ENCODE measurements at regions of chr1 and their contacts with region 1.

Region 1: GRCh38 chr1:25338188-25338981 is at the start of gene TMEM50A:
- DNase-seq: peak; percentile 70 to 94
- H3K4me3 ChIP-seq: peak within 1 kb of the TSS; percentile 85 to 98
- H3K27ac ChIP-seq: peak within 1 kb of the TSS; percentile 98 to 100
- H3K4me1 ChIP-seq: peaks cover 7 to 15% of the 10 kb centered on the region in 2 donors
- H3K27me3 ChIP-seq: no peaks in the 10 kb centered on the region
- CTCF ChIP-seq: no peak
- total RNA-seq, gene TMEM50A: 143 TPM

Region 2: DNA sequence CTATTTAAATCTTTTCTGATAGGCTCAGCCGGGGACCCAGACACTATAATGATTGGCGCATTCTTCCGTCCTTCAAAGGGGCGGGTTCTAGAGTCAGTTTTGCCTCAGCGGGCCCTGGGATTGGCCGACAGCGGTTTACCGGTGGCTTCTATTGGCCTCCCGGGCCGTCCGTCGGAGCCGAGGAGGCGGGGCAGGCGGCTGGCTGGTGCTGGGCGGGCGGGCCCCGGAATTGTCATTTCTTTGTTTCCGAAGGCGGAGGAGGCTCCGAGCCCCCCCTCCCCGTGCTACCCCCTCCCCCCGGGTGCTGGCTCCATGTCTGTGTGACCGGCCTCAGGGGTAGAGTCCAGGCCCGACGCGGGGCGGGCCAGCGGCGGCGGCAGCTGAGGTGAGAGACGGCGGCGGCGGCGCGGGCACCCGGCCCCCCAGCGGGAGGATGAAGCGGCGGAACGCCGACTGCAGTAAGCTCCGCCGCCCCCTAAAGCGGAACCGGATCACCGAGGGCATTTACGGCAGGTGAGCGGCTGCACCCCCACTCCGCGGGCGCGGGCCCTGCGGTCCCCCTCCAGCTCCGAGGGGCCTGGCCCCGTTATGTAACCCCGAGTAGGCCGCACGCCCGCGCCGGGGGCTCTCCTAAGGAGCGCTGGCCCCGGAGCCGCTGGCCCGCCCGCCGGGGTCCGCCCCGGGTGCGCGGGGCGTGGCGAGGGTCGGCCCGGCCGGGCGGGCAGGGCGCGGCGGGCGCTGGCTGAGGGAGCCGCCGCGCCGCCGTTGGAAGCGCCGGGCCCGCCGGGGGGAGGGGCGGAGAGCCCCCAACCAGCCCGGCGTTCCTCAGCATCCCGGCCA is 92.5 kb after region 1 on chr1 and contains the start of gene MACO1:
- intact Hi-C with region 1: loop called (anchors 2 kb)
- DNase-seq: peak; percentile 91 to 98
- H3K4me3 ChIP-seq: peak within 1 kb of the TSS; percentile 97 to 99
- H3K27ac ChIP-seq: peak within 1 kb of the TSS; percentile 92 to 98
- H3K4me1 ChIP-seq: peaks cover 4 to 18% of the 10 kb centered on the region in 2 donors
- H3K27me3 ChIP-seq: no peaks in the 10 kb centered on the region
- CTCF ChIP-seq: no peak
- total RNA-seq, gene MACO1: 49.2 TPM